ENCODE measurements at regions of chr2 and their contacts with region 1.

Region 1: DNA sequence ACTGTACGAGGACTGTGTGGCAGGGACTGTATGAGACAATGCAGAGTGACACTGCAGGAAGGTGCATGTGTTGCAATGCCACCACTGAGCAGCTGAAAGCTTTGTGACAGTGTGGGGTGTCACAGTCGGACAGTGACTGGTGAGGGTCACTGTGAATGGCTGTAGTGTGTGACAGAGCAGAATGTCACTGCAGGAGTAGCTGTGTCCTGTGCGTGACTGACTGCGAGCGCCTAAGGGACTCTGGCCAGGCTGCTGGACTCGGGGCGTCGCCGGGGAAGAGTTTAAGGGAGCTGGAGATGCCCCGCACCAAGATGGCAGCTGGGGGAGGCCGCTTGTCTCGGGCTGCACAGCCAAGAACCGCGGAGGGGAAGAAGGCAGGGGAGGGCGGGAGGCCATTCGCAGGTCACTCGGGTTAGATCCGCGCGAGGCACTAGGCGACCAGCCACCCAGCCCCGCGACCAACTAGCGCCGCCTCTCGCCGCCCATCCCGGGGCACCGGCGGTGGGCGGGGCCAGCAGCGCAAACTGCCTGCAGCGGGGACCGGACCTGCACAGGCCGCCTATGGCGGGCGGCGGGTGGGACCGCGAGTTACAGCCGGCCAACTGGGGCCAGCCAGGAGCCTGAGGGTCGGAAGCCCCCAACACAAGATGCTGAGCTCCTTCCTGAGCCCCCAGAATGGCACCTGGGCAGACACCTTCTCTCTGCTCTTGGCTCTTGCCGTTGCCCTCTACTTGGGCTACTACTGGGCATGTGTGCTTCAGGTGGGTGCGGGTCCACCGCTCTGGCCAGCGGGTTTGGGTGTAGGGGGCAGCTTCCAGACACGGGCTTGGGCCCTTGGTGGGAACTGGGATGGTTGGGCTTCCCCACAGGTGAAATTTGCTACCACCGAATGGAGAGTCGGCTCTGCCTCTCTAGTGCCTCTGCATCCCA is at the start of gene ABHD1:
- DNase-seq: peak in 1 of 2 experiments; percentile 85
- H3K4me3 ChIP-seq: peak within 1 kb of the TSS; percentile 33 to 68 (median 65)
- H3K27ac ChIP-seq: no peak within 1 kb of the TSS
- H3K4me1 ChIP-seq: peaks cover 0 to 15% (median 9%) of the 10 kb centered on the region in 4 experiments; a peak in 6 of 7 replicates
- H3K27me3 ChIP-seq: peaks cover 8 to 50% (median 38%) of the 10 kb centered on the region in 4 experiments
- CTCF ChIP-seq: no peak
- EP300 ChIP-seq: no peak
- POLR2A ChIP-seq: peak in 1 of 2 experiments; percentile 72; a peak in 2 of 3 replicates
- RAD21 ChIP-seq: no peak
- total RNA-seq, gene ABHD1: 0.20 and 0.50 TPM in 2 replicates

Region 2: GRCh38 chr2:26870585-26871095 is 252.9 kb before region 1 on chr2:
- CTCF ChIA-PET with region 1: no interaction called
- POLR2A ChIA-PET with region 1: no interaction called
- DNase-seq: peak in 1 of 2 experiments; percentile 4
- H3K4me3 ChIP-seq: no peak overlapping the region
- H3K27ac ChIP-seq: no peak overlapping the region
- H3K4me1 ChIP-seq: peaks cover 0 to 3% (median 0%) of the 10 kb centered on the region in 4 experiments; a peak in 1 of 7 replicates
- H3K27me3 ChIP-seq: peaks cover 0 to 8% (median 3%) of the 10 kb centered on the region in 4 experiments; a peak in 3 of 7 replicates
- CTCF ChIP-seq: no peak
- EP300 ChIP-seq: no peak
- POLR2A ChIP-seq: no peak
- RAD21 ChIP-seq: no peak

Region 3: GRCh38 chr2:26922405-26923188 is 201.0 kb before region 1 on chr2:
- CTCF ChIA-PET with region 1: no interaction called
- POLR2A ChIA-PET with region 1: no interaction called
- DNase-seq: no peak
- H3K4me3 ChIP-seq: no peak overlapping the region
- H3K27ac ChIP-seq: no peak overlapping the region
- H3K4me1 ChIP-seq: peaks cover 0 to 8% (median 5%) of the 10 kb centered on the region in 4 experiments; a peak in 5 of 7 replicates
- H3K27me3 ChIP-seq: no peaks in the 10 kb centered on the region
- CTCF ChIP-seq: peak; percentile 82 to 88 (median 87)
- EP300 ChIP-seq: no peak
- POLR2A ChIP-seq: no peak
- RAD21 ChIP-seq: peak; percentile 79 to 84

Region 4: DNA sequence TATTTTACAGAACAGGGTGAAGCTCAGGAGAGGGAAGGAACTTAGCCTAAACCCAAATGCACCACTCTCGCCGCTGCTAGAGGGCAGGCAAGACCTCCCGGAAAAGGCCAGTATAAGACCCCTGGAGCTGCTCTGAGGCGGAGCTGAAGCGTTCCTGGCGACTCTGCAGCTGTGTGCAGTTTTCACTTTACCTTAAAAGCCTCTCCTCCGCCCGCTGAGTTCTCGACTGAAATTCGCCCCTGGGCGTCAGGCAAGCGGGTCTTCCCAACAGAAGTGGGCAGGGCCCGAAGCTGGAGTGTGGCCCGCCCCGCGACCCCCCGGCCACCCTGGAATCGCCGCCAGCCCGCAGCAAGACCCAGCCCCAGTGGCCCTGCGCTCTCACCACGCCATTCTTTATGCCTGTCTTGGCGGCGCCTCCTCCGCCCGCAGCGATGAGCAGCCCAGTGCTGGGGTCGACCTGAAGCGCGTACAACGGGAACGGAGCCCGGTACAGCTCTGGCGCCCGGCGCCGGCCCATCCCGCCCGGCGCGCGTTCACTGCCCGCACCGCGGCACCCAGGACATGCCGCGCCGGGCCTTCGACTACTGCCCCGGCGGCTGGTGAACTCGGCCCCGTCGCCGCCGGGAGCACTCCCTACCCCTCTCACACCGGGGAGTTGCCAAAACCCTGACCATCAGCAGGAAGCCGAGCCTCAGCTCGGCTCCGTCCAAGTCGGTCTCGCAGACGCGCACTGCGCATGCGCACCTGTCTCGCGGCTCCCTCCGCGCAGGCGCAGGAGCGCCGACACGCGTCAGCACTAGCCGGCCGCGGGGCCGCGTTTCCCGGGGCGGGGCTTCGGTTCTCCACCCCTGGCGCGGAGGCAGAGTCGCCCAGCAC is 10.6 kb after region 1 on chr2 and contains the start of gene PREB:
- CTCF ChIA-PET with region 1: interaction called, 38 read pairs
- POLR2A ChIA-PET with region 1: interaction called, 24 read pairs
- DNase-seq: peak; percentile 92 to 100
- H3K4me3 ChIP-seq: peak within 1 kb of the TSS; percentile 68 to 91 (median 88)
- H3K27ac ChIP-seq: peak within 1 kb of the TSS; percentile 25; the same call in 1 of the 2 replicates
- H3K4me1 ChIP-seq: peaks cover 0 to 4% (median 3%) of the 10 kb centered on the region in 4 experiments; a peak in 5 of 7 replicates
- H3K27me3 ChIP-seq: no peaks in the 10 kb centered on the region
- CTCF ChIP-seq: peak in 2 of 3 experiments; percentile 46 to 60; a peak in 2 of 4 replicates
- EP300 ChIP-seq: no peak
- POLR2A ChIP-seq: no peak
- RAD21 ChIP-seq: peak; percentile 56 to 67
- total RNA-seq, gene PREB: 51.2 and 54.1 TPM in 2 replicates

Region 5: DNA sequence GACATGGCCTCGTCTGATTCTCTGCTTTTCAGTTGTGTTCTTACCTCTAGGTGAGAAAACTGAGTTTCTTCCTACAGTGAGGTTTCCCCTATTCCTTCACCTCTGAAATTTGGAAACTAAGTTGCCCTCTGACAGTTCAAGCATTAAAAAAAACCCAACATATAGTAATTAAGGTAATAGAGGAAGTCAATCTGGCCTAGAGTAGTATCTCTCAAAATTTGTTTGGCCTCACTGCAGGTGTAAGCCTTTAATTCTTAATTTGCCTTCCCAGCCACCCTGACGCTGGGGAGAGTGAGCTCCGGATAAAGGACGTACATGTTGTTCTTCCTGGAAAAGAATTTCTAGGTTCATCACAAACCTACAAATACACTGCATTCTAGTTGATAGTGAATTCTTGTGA is 95.0 kb after region 1 on chr2:
- CTCF ChIA-PET with region 1: no interaction called
- POLR2A ChIA-PET with region 1: no interaction called
- DNase-seq: no peak
- H3K4me3 ChIP-seq: peak overlapping the region in 2 of 4 experiments; percentile 78 to 88; a peak in 4 of 8 replicates
- H3K27ac ChIP-seq: no peak overlapping the region; the same call in 1 of the 2 replicates
- H3K4me1 ChIP-seq: peaks cover 0 to 9% (median 5%) of the 10 kb centered on the region in 4 experiments; a peak in 6 of 7 replicates
- H3K27me3 ChIP-seq: no peaks in the 10 kb centered on the region
- CTCF ChIP-seq: no peak
- EP300 ChIP-seq: no peak
- POLR2A ChIP-seq: no peak
- RAD21 ChIP-seq: no peak

Region 6: DNA sequence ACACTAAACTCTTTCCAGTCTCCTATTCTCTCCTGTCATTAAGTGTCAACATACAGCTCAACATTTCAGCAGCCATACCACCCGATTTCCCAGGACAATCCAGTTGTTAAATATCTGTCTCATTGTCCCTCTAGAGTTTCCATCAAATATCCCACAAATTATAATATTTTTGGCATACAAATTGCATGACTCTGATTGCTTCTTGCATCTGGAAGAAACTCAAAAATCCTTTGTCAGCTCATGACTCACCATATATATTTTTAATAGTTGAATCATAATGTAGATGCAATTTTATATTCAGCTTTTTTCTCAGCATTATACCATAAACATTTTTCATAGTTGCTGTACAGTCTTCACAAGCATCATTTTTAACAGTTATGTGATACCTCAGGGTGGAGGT is 132.1 kb after region 1 on chr2:
- CTCF ChIA-PET with region 1: no interaction called
- POLR2A ChIA-PET with region 1: no interaction called
- DNase-seq: no peak
- H3K4me3 ChIP-seq: no peak overlapping the region
- H3K27ac ChIP-seq: no peak overlapping the region
- H3K4me1 ChIP-seq: peaks cover 0 to 8% (median 4%) of the 10 kb centered on the region in 4 experiments; a peak in 6 of 7 replicates
- H3K27me3 ChIP-seq: peaks cover 0 to 12% (median 7%) of the 10 kb centered on the region in 4 experiments; a peak in 5 of 7 replicates
- CTCF ChIP-seq: no peak
- EP300 ChIP-seq: no peak
- POLR2A ChIP-seq: no peak
- RAD21 ChIP-seq: no peak

Measured in H1 (cell line).